Heart right ventricle (tissue), 16 donors: ENCODE measurements at regions of chr1 and their contacts with region 1.

Region 1: DNA sequence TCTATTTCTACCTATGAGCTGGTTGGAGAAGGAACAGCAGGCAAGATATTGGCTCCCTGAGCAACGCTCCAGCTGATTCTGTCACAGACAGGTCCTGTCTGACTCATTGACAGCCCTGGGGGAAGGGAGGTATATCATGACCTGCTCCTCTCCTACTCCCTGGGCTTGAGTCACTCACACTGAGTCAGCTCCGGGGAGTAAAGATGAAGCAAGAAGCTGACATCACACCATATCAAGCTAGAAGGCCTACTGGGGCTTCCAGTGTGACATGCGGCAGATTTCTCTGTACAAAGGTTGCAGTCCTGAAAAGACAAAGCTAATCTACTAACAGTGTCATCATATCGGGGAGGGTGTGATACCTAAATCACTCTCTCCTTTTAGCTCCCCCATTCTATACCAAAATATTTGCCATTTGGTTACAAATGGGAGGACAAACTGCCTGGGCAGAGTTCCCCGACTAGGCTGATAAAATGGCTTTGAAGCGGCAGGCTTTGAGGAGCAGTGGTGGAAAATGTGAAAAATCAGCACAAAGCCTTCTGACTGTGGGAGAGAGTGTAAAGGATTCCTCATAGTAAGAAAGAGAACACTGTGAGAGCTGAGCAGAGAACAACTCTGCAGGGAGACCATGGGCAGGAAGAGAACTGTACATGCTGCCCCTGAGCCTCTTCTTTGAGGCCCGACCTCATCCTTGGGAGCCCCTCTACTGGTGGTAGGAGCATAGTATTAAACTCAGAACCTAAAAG is 15.5 kb downstream of the PI4KB start:
- DNase-seq: peak; percentile 33 to 74
- ATAC-seq: peak; percentile 75 to 95 (median 86)
- H3K4me3 ChIP-seq: no peak overlapping the region
- H3K27ac ChIP-seq: peak overlapping the region in 9 of 10 donors; percentile 58 to 91 (median 71)
- H3K4me1 ChIP-seq: peaks cover 38 to 82% (median 67%) of the 10 kb centered on the region in 9 donors
- H3K27me3 ChIP-seq: no peaks in the 10 kb centered on the region
- CTCF ChIP-seq: no peak

Region 2: DNA sequence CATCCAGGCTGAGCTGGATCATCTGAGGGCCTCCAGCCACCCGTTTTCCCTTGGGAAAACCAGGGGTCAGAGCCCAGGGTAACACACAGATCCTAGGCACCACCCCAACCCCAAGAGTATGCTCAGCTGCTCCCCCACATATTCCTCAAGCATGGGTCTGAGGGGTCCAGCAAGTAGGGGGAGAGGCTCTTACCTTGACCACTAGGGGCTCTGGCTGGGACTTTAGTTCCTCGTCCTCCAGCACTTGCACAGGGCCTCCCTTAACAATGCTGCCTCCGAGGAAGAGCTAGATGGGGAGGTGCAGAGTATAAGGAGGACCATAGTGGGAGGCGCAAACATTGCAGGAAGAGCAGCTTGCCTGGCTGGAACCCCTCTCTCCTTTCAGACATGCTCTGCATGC is 53.2 kb after region 1 on chr1:
- intact Hi-C with region 1: loop called in 1 of 10 experiments (anchors 5 kb)
- DNase-seq: no peak
- ATAC-seq: no peak
- H3K4me3 ChIP-seq: no peak overlapping the region
- H3K27ac ChIP-seq: no peak overlapping the region
- H3K4me1 ChIP-seq: peaks cover 9 to 31% (median 25%) of the 10 kb centered on the region in 9 donors
- H3K27me3 ChIP-seq: no peaks in the 10 kb centered on the region
- CTCF ChIP-seq: no peak

Region 3: GRCh38 chr1:151596166-151596953 is 284.6 kb after region 1 on chr1:
- intact Hi-C with region 1: no loop called
- DNase-seq: no peak
- ATAC-seq: no peak
- H3K4me3 ChIP-seq: no peak overlapping the region
- H3K27ac ChIP-seq: no peak overlapping the region
- H3K4me1 ChIP-seq: peaks cover 0 to 12% (median 0%) of the 10 kb centered on the region in 9 donors
- H3K27me3 ChIP-seq: no peaks in the 10 kb centered on the region
- CTCF ChIP-seq: no peak